SK-N-SH (cell line): ENCODE measurements at regions of chr2 and their contacts with region 1.

Region 1: DNA sequence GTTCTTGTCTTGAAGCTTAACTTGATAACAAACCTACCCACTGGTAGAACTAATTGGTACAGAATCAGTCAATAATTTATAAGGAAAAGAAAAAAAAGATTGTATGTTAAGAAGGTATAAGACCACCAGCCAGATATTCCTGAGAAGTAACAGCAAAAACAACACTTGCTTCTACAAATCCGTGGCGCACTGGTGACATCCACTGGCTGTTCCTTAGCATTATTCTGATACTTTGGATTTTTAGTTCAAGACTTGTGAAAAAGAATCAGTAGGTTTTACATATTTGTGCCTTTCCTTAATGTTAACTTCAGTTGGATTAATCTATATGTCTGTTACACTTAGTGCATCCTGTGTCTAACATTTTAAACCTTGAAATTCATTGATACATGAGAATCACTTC is 141.8 kb downstream of the GRB14 start:
- DNase-seq: peak; percentile 22
- H3K4me3 ChIP-seq: no peak overlapping the region
- H3K27ac ChIP-seq: no peak overlapping the region
- H3K4me1 ChIP-seq: no peaks in the 10 kb centered on the region
- H3K27me3 ChIP-seq: no peaks in the 10 kb centered on the region
- CTCF ChIP-seq: peak; percentile 66
- EP300 ChIP-seq: no peak
- RAD21 ChIP-seq: peak; percentile 94

Region 2: GRCh38 chr2:163155279-163155883 is 1324.1 kb before region 1 on chr2:
- CTCF ChIA-PET with region 1: interaction called, 13 read pairs
- POLR2A ChIA-PET with region 1: no interaction called
- DNase-seq: peak; percentile 33
- H3K4me3 ChIP-seq: no peak overlapping the region
- H3K27ac ChIP-seq: no peak overlapping the region
- H3K4me1 ChIP-seq: peaks cover 0 to 3% of the 10 kb centered on the region in 2 experiments; a peak in 1 of 4 replicates
- H3K27me3 ChIP-seq: no peaks in the 10 kb centered on the region
- CTCF ChIP-seq: peak; percentile 73
- EP300 ChIP-seq: no peak
- RAD21 ChIP-seq: peak; percentile 71

Region 3: GRCh38 chr2:163171786-163172531 is 1307.5 kb before region 1 on chr2:
- CTCF ChIA-PET with region 1: interaction called, 12 read pairs
- POLR2A ChIA-PET with region 1: no interaction called
- DNase-seq: no peak
- H3K4me3 ChIP-seq: no peak overlapping the region
- H3K27ac ChIP-seq: no peak overlapping the region
- H3K4me1 ChIP-seq: peaks cover 0 to 3% of the 10 kb centered on the region in 2 experiments; a peak in 2 of 4 replicates
- H3K27me3 ChIP-seq: no peaks in the 10 kb centered on the region
- CTCF ChIP-seq: no peak
- EP300 ChIP-seq: no peak
- RAD21 ChIP-seq: no peak

Region 4: GRCh38 chr2:163191372-163191771 is 1288.1 kb before region 1 on chr2:
- CTCF ChIA-PET with region 1: interaction called, 11 read pairs
- POLR2A ChIA-PET with region 1: no interaction called
- DNase-seq: peak; percentile 35
- H3K4me3 ChIP-seq: peak overlapping the region in 1 of 2 experiments; percentile 36; a peak in 1 of 4 replicates
- H3K27ac ChIP-seq: no peak overlapping the region
- H3K4me1 ChIP-seq: no peaks in the 10 kb centered on the region
- H3K27me3 ChIP-seq: no peaks in the 10 kb centered on the region
- CTCF ChIP-seq: peak; percentile 77
- EP300 ChIP-seq: no peak
- RAD21 ChIP-seq: peak; percentile 85

Region 5: DNA sequence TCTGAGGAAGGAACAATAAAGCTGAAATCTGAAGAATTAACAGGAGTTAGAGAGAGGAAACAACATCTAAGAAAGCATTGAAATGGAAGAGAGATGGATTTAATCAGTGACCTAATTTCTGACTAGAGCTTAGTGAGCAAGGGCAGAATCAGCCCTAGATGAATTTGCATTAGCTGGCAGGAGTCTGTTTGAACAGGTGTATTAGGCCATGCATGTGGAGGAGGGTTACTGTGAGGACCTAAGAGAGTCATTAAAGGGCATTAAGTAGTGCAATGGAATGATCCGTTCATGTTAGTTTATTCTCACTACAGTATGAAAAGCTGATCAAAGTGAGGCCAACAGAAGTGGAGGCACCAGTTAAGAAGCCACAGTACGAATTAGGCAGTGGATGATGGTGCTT is 143.5 kb before region 1 on chr2:
- CTCF ChIA-PET with region 1: no interaction called
- POLR2A ChIA-PET with region 1: no interaction called
- DNase-seq: no peak
- H3K4me3 ChIP-seq: no peak overlapping the region
- H3K27ac ChIP-seq: no peak overlapping the region
- H3K4me1 ChIP-seq: no peaks in the 10 kb centered on the region
- H3K27me3 ChIP-seq: no peaks in the 10 kb centered on the region
- CTCF ChIP-seq: no peak
- EP300 ChIP-seq: no peak
- RAD21 ChIP-seq: no peak

Region 6: GRCh38 chr2:164456619-164457018 is 22.8 kb before region 1 on chr2:
- CTCF ChIA-PET with region 1: interaction called, 11 read pairs
- POLR2A ChIA-PET with region 1: no interaction called
- DNase-seq: peak; percentile 51
- H3K4me3 ChIP-seq: no peak overlapping the region
- H3K27ac ChIP-seq: peak overlapping the region in 1 of 2 experiments; percentile 19; a peak in 1 of 4 replicates
- H3K4me1 ChIP-seq: peaks cover 0 to 13% of the 10 kb centered on the region in 2 experiments; a peak in 2 of 4 replicates
- H3K27me3 ChIP-seq: no peaks in the 10 kb centered on the region
- CTCF ChIP-seq: no peak
- EP300 ChIP-seq: no peak
- RAD21 ChIP-seq: no peak

Region 7: GRCh38 chr2:164890544-164890943 is 411.1 kb after region 1 on chr2:
- CTCF ChIA-PET with region 1: no interaction called
- POLR2A ChIA-PET with region 1: no interaction called
- DNase-seq: peak; percentile 53
- H3K4me3 ChIP-seq: no peak overlapping the region
- H3K27ac ChIP-seq: peak overlapping the region in 1 of 2 experiments; percentile 24; a peak in 2 of 4 replicates
- H3K4me1 ChIP-seq: peaks cover 0 to 8% of the 10 kb centered on the region in 2 experiments; a peak in 2 of 4 replicates
- H3K27me3 ChIP-seq: no peaks in the 10 kb centered on the region
- CTCF ChIP-seq: no peak
- EP300 ChIP-seq: peak in 1 of 2 experiments; percentile 95; a peak in 2 of 4 replicates
- RAD21 ChIP-seq: peak; percentile 27

Region 8: DNA sequence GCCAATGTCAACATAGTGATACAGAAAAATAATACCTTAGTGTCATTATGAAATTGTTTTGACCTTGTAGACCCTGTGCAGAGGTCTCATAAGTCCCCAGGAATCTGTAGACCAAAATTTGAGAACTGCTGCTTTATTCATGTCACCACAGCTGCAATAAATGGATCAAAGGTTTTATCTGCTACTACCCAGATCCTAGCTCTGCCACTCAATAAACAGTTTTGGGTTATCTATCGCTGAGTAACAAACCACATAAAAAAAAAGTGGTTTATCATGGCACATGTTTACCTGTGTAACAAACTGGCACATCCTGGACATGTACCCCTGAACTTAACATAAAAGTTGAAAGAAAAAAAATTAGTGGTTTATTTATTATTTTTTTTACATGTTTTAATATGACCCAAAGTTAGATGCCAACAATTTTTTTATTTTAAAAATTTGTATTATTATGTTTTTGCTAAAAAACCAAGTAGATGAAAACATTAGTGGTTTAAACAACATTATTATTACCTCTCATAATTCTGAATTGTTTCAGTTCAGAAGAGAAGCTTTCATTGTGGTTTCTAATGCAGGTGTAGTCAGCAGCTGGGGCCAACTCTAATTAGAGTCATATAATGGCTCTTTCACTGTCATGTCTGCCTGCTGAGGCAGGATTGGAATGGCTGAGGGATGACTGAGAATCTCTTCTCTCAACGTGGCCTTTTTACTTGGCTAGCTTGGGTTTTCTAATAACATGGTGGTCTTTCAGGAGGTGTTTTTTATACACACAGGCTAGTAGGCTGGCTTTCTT is 579.2 kb after region 1 on chr2:
- CTCF ChIA-PET with region 1: no interaction called
- POLR2A ChIA-PET with region 1: no interaction called
- DNase-seq: no peak
- H3K4me3 ChIP-seq: no peak overlapping the region
- H3K27ac ChIP-seq: no peak overlapping the region
- H3K4me1 ChIP-seq: peaks cover 0 to 14% of the 10 kb centered on the region in 2 experiments; a peak in 2 of 4 replicates
- H3K27me3 ChIP-seq: no peaks in the 10 kb centered on the region
- CTCF ChIP-seq: no peak
- EP300 ChIP-seq: no peak
- RAD21 ChIP-seq: no peak